Cardiac septum (tissue), 1 donor: ENCODE measurements at regions of chr19 and their contacts with region 1.

Region 1: GRCh38 chr19:2274931-2275535 is 6.9 kb downstream of the PEAK3 start:
- DNase-seq: no peak

Region 2: GRCh38 chr19:2391118-2391725 is 116.2 kb after region 1 on chr19:
- intact Hi-C with region 1: loop called (anchors 5 kb)
- DNase-seq: no peak